ENCODE measurements at regions of chr14 and their contacts with region 1.

Region 1: GRCh38 chr14:69299286-69300035 is 39.5 kb downstream of the GALNT16 start:
- DNase-seq: no peak
- H3K4me3 Mint-ChIP-seq: no peak overlapping the region
- H3K27ac Mint-ChIP-seq: no peak overlapping the region
- H3K4me1 Mint-ChIP-seq: no peaks in the 10 kb centered on the region
- H3K27me3 Mint-ChIP-seq: no peaks in the 10 kb centered on the region
- CTCF ChIP-seq: no peak

Region 2: DNA sequence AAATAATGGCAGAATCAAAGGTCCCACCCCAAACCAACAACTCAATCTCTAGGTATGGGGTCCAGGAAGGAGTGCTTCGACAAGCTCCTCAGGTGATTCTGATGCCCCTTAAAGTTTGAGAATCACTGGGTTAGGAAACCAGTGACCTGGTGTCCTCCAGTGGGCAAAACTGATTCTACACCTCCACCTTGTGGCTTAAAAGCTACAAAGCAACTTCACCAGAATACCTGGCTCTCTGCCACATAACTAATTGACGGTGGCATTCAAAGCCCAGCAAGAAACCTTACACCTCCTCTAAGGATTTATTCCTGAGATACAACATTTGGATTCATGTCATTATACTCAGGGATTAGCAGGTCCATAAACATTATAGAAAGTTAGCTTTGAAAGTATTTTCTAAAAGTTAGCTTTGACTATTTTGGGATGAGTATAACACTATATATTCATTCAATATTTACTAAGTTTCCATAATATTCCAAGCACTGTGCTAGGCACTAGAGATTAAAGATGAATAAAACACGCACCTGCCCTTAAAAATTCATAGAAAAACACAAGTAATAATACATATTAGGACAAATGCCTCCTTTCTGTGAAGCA is 192.0 kb before region 1 on chr14:
- CTCF ChIA-PET with region 1: no interaction called
- POLR2A ChIA-PET with region 1: no interaction called
- intact Hi-C with region 1: no loop called
- DNase-seq: peak; percentile 84
- H3K4me3 Mint-ChIP-seq: no peak overlapping the region
- H3K27ac Mint-ChIP-seq: no peak overlapping the region
- H3K4me1 Mint-ChIP-seq: peaks cover 2% of the 10 kb centered on the region
- H3K27me3 Mint-ChIP-seq: no peaks in the 10 kb centered on the region
- CTCF ChIP-seq: peak; percentile 79

Region 3: GRCh38 chr14:69288011-69288771 is 11.3 kb before region 1 on chr14:
- CTCF ChIA-PET with region 1: interaction called, 11 read pairs
- POLR2A ChIA-PET with region 1: no interaction called
- intact Hi-C with region 1: no loop called
- DNase-seq: peak; percentile 33
- H3K4me3 Mint-ChIP-seq: no peak overlapping the region
- H3K27ac Mint-ChIP-seq: no peak overlapping the region
- H3K4me1 Mint-ChIP-seq: no peaks in the 10 kb centered on the region
- H3K27me3 Mint-ChIP-seq: no peaks in the 10 kb centered on the region
- CTCF ChIP-seq: peak; percentile 20